ENCODE measurements at regions of chr1 and their contacts with region 1.

Region 1: GRCh38 chr1:61077676-61078541 is 4.5 kb upstream of the NFIA start:
- DNase-seq: peak; percentile 92 to 98
- H3K4me3 ChIP-seq: peak overlapping the region; percentile 52 to 69 (median 56)
- H3K27ac ChIP-seq: peak overlapping the region; percentile 63 to 96 (median 89)
- H3K4me1 ChIP-seq: peaks cover 40 to 54% (median 52%) of the 10 kb centered on the region in 4 donors
- H3K27me3 ChIP-seq: no peaks in the 10 kb centered on the region
- CTCF ChIP-seq: peak in 2 of 7 experiments; percentile 8 to 24
- EP300 ChIP-seq: no peak
- POLR2A ChIP-seq: no peak

Region 2: DNA sequence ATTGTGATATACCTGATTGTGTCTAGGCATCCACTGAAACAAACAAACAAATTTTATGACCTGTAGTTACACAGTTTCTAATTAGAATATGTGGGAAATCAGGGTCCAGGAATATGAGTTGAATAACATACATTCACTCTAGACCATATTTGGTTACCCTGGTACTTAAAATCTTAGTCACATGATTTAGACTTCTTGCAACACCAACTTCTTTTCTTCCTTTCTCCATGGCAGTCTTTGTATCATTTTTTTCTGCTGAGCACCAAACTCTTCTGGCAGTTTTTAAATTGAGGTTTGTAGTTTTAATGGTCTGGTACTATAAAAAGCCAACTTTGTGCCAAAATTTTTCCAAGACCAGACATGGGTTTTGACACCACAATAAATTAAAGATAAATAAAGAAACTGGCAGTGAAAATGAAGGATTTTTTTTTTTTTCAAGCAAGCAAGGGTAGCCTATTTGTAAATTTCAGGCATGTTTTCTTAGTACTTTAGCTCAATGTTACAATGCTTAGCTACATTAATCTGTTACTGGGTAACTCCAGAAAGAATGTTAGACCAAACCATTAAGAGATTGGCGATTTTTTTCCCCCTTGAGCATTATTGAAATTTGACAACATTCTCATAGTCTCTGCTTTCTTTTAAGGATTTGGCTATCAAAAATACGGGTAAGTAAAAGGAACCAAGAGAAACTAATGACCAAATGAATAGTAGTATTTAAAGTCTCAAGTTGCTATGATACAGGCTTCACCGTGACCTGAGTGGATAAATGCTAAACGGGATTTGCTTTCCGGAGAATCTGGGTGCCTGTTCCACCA is 112.9 kb after region 1 on chr1:
- intact Hi-C with region 1: loop called (anchors 10 kb)
- DNase-seq: no peak
- H3K4me3 ChIP-seq: no peak overlapping the region
- H3K27ac ChIP-seq: peak overlapping the region in 4 of 5 donors; percentile 18 to 61 (median 42)
- H3K4me1 ChIP-seq: peaks cover 5 to 73% (median 36%) of the 10 kb centered on the region in 4 donors
- H3K27me3 ChIP-seq: no peaks in the 10 kb centered on the region
- CTCF ChIP-seq: no peak
- EP300 ChIP-seq: no peak
- POLR2A ChIP-seq: no peak